Activated T-helper 1 cell treated with anti-CD3 and anti-CD28 coated beads, Interleukin-12 subunit alpha, Interleukin-12 subunit beta, Interleukin-2, Interleukin-4 antibody, amounts not matched to agents 30 ng/mL and 10 ng/mL and 1 ng/mL, durations not matched to agents 14 hours and 24 hours and 36 hours (primary cell): ENCODE measurements at regions of chr6 and their contacts with region 1.

Region 1: GRCh38 chr6:20092071-20092566 is 120.2 kb downstream of the MBOAT1 start:
- DNase-seq: no peak
- H3K4me3 Mint-ChIP-seq: no peak overlapping the region
- H3K27ac Mint-ChIP-seq: no peak overlapping the region
- H3K4me1 Mint-ChIP-seq: no peaks in the 10 kb centered on the region
- H3K27me3 Mint-ChIP-seq: no peaks in the 10 kb centered on the region

Region 2: GRCh38 chr6:20109526-20109925 is 17.4 kb after region 1 on chr6:
- intact Hi-C with region 1: no loop called
- DNase-seq: no peak
- H3K4me3 Mint-ChIP-seq: no peak overlapping the region
- H3K27ac Mint-ChIP-seq: no peak overlapping the region
- H3K4me1 Mint-ChIP-seq: no peaks in the 10 kb centered on the region
- H3K27me3 Mint-ChIP-seq: no peaks in the 10 kb centered on the region

Region 3: GRCh38 chr6:20126789-20127653 is 34.9 kb after region 1 on chr6:
- intact Hi-C with region 1: loop called (anchors 1 kb)
- DNase-seq: peak; percentile 46
- H3K4me3 Mint-ChIP-seq: no peak overlapping the region
- H3K27ac Mint-ChIP-seq: no peak overlapping the region
- H3K4me1 Mint-ChIP-seq: peaks cover 8% of the 10 kb centered on the region
- H3K27me3 Mint-ChIP-seq: no peaks in the 10 kb centered on the region